ENCODE measurements at regions of chr2 and their contacts with region 1.

Region 1: DNA sequence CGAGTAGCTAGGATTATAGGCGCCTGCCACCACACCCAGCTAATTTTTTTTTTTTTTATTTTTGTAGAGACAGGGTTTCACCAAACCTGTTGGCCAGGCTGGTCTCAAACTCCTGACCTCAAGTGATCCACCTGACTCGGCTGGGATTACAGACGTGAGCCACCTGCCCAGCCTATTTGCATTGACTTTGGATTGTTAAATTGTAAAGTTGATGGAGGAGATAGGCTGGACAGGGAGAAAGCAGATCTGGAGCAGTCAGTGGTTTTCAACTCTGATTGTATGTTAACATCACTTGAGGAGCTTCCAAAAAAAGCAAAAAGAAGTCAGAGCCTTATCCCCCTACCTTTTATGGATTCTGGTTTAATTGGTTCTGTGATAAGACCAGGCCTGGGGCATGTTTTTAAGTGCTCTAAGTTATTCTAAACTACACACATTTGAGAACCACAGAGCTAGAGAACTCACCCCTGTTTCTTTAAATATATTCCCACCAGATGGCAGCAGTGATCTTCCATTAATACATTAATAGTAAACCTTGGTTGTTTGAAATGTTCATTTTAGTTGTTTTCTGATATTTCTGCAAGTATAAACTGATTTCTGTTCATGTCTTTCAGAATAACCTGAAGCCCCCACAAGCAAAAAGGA is 7.5 kb downstream of the C2orf49 start:
- DNase-seq: peak; percentile 62
- H3K4me3 ChIP-seq: no peak overlapping the region
- H3K27ac ChIP-seq: no peak overlapping the region
- H3K4me1 ChIP-seq: no peaks in the 10 kb centered on the region
- H3K27me3 ChIP-seq: no peaks in the 10 kb centered on the region
- CTCF ChIP-seq: peak; percentile 12 to 24
- POLR2A ChIP-seq: no peak

Region 2: DNA sequence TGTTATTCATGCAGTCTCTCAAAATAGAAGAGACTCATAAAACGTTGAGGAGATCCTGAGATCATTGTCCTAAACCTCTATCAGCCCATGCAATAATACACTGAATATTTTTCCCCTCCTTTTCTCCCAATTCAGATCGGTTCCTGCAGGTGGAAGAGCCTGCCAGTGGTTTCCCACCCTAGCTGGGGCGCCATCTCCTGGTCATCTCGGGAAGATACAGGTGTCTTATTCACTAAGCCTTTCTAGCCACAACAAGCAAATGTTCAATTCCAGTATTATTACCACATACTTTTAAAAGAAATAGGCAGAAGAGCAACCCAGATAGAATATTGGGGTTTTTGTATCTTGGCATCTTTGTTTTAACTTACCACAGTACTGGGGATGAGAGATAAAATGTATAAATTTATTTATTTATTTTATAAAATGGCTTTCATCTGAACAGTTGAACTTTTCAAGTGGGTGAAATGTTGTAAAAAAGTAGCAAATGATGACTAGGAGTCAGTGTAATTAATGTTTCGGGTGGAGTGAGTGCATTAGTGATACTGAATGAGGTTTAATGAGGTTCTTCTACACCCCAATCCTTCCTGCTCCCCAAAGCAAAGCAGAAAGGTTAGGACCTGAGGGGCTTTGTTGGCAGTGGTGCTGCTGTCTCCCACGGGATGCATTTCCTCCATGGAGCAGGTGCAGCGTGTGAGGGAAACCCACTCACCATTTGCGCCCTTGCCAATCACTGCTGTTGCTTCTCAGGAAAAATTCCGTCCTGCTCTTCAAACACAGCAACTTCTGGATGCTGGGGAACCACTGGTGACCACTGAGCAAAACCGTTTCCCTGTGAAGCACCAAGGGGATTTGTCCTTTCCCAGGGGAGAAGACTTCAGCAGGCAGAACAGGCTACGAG is 201.2 kb after region 1 on chr2:
- CTCF ChIA-PET with region 1: interaction called, 38 read pairs
- POLR2A ChIA-PET with region 1: no interaction called
- dilution Hi-C with region 1: no loop called
- intact Hi-C with region 1: loop called (anchors 1 kb)
- DNase-seq: peak; percentile 76
- H3K4me3 ChIP-seq: no peak overlapping the region
- H3K27ac ChIP-seq: no peak overlapping the region
- H3K4me1 ChIP-seq: peaks cover 17% of the 10 kb centered on the region
- H3K27me3 ChIP-seq: peaks cover 0 to 3% of the 10 kb centered on the region in 2 experiments
- CTCF ChIP-seq: peak; percentile 74 to 77
- POLR2A ChIP-seq: no peak

Measured in endothelial cell of umbilical vein (primary cell).